Sciatic nerve (tissue), 2 donors: ENCODE measurements at regions of chr17 and their contacts with region 1.

Region 1: DNA sequence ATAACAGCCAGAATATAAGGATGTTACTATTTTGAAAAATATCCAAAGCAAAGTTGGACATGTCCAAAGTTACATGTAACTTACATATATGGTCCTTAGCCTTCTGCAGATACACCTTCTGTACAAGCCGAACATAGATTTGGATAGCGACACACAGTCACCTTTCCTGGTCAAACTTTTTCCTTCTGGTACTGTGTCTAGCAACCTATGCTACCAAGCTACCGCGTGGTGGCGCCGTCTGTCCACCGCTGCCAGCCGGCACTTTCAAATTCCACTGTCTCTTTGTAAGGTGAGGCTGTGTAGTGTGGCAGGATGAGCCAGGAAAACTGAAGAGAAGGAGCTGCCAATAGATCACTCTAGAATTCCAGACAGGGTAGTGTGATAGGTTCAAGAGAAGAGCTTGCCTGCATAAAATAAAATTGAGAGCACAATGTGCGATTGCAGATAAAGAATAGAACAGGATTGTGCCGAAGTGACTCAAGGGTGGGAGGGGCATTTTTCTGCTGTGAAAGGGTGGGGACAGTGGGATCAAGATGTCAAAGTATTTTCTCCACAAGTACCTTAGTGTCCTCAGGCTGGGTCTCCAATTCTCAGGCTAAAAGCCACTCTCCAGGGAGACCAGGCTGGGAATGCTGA is 366.9 kb downstream of the SLC39A11 start:
- DNase-seq: peak; percentile 77
- ATAC-seq: peak; percentile 82

Region 2: DNA sequence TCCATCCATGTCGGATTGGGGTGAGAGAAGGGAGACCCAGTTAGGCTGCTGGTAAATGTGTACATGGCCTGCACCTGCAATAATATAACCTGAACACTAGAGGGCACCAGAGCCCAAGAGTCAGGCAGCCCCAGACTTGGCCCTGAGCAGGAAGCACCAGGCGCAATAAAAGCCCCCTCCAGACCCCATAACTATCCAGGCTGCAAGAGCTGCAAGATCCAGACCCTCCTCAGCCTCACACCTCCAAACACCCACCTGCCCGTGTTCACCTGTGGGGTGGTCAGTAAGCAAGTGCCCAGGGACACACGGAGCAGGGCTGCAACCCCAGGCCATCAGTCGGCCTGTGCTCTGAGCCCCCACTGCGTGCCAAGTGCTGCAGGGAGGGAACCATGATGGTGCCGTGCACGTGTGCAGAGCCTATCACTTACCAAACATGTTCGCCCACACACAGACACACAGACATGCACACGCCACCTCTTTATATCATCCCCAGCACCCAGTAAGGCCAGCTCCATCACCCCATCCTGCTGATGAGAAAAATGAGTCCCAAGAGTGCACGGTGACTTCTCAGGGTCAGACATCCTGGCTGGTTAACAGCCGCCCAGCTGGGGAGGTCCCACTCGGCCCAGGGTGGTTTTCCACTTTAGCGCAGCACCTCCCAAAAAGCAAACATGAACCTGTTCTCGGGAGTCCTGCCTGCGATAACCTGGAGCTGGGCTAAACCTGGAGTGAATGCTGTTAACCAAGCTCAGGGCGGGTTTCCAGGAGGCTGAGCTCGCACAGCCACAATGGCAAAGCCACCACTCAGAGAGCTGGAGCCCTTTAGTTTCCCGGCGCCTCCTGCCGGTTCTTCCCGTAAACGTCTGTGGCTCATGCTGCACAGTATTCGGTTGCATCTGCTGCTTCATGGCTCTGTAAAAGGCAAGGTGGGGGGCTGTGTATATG is 165.0 kb before region 1 on chr17:
- intact Hi-C with region 1: loop called (anchors 10 kb)
- DNase-seq: no peak
- ATAC-seq: peak; percentile 82

Region 3: GRCh38 chr17:73166731-73167581 is 441.4 kb after region 1 on chr17:
- intact Hi-C with region 1: loop called (anchors 10 kb)
- DNase-seq: no peak
- ATAC-seq: no peak